ENCODE measurements at regions of chr21 and their contacts with region 1.

Region 1: DNA sequence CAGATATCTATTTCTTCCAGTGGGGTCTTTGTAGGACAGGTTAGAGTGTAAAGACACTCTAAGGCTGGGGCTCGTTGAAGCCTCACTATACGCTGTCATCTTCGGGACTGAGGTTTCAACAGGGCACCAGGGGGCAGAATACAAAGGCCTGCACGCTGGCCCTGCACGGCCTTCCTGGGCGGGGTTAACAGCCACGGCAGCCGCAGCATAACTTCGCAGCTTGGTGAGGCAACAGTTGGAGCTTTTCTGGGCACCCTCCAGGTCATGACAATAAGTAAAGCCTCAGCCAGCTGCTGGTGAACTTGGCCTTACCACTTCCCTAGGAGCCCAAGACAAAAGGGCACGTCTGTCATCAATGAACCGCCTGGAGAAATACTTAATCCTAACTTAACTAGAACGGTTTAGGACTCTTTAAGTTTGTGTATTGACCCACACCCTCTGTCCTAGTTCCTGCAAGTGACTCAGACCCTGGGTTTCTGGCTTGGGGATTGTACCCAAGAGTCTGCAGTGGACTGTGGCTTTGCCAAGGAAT is 2.3 kb upstream of the RUNX1 start:
- DNase-seq: peak; percentile 68 to 94 (median 84)
- ATAC-seq: peak; percentile 41
- H3K4me3 ChIP-seq: no peak overlapping the region
- H3K4me3 Mint-ChIP-seq: peak overlapping the region; percentile 95
- H3K27ac ChIP-seq: peak overlapping the region in 1 of 2 experiments; percentile 79
- H3K27ac Mint-ChIP-seq: peak overlapping the region; percentile 97
- H3K4me1 ChIP-seq: peaks cover 29% of the 10 kb centered on the region
- H3K4me1 Mint-ChIP-seq: peaks cover 49% of the 10 kb centered on the region
- H3K27me3 ChIP-seq: no peaks in the 10 kb centered on the region
- H3K27me3 Mint-ChIP-seq: no peaks in the 10 kb centered on the region
- CTCF ChIP-seq: peak; percentile 58

Region 2: GRCh38 chr21:34807146-34807880 is 244.0 kb before region 1 on chr21:
- CTCF ChIA-PET with region 1: no interaction called
- POLR2A ChIA-PET with region 1: interaction called, 3 read pairs
- intact Hi-C with region 1: loop called (anchors 2 to 10 kb)
- DNase-seq: peak in 8 of 9 experiments; percentile 45 to 87 (median 66)
- ATAC-seq: peak; percentile 86
- H3K4me3 ChIP-seq: no peak overlapping the region
- H3K4me3 Mint-ChIP-seq: no peak overlapping the region
- H3K27ac ChIP-seq: peak overlapping the region; percentile 12 to 84
- H3K27ac Mint-ChIP-seq: peak overlapping the region; percentile 92
- H3K4me1 ChIP-seq: peaks cover 44% of the 10 kb centered on the region
- H3K4me1 Mint-ChIP-seq: peaks cover 70% of the 10 kb centered on the region
- H3K27me3 ChIP-seq: no peaks in the 10 kb centered on the region
- H3K27me3 Mint-ChIP-seq: no peaks in the 10 kb centered on the region
- CTCF ChIP-seq: no peak

Region 3: DNA sequence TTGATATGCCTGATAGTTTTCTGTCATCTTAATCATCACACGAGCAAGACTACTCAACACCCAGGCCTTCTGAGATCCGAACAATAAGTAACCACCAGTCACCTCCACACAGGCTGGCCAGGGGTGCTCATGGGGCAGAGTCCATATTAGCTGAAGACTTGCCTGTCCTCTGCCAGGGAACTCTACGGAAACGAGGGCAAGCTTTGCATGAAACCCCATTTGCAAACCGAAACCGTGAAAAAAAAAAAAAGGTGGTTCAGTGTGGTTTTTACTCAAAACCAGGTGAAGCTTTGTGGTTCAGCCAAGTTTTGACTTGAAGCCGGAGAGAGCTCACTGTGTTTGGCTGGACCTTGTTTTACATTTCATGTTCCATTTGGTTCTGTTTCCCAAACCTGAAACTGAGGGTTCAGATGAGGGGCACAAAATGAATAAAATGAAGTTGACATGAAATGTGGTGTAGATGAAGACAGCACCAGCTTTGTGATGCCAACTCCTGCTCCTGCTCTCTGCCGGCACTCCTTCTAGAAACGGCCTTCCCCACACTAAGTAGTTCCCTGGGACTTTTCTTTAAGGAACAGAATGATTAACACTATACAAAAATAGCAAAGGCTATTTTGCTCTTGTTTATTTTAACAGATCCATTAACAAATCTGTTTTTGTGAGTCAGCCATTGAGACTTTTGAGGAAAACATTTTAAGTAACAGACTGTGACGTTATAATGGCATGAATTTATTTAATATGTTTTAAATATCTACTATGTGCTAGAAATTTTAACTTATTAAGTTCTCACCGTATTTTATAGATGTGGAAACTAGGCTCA is 77.0 kb before region 1 on chr21:
- CTCF ChIA-PET with region 1: interaction called, 4 read pairs
- POLR2A ChIA-PET with region 1: interaction called, 22 read pairs
- intact Hi-C with region 1: loop called in 1 of 2 experiments (anchors 2 kb)
- DNase-seq: peak in 8 of 9 experiments; percentile 30 to 86 (median 54)
- ATAC-seq: peak; percentile 84
- H3K4me3 ChIP-seq: peak overlapping the region; percentile 19 to 22
- H3K4me3 Mint-ChIP-seq: peak overlapping the region; percentile 78
- H3K27ac ChIP-seq: peak overlapping the region; percentile 8 to 36
- H3K27ac Mint-ChIP-seq: peak overlapping the region; percentile 89
- H3K4me1 ChIP-seq: peaks cover 59% of the 10 kb centered on the region
- H3K4me1 Mint-ChIP-seq: peaks cover 85% of the 10 kb centered on the region
- H3K27me3 ChIP-seq: no peaks in the 10 kb centered on the region
- H3K27me3 Mint-ChIP-seq: no peaks in the 10 kb centered on the region
- CTCF ChIP-seq: no peak

Region 4: GRCh38 chr21:35026617-35027562 is 24.5 kb before region 1 on chr21:
- CTCF ChIA-PET with region 1: interaction called, 27 read pairs
- POLR2A ChIA-PET with region 1: interaction called, 80 read pairs
- intact Hi-C with region 1: loop called in 1 of 2 experiments (anchors 1 kb)
- DNase-seq: peak; percentile 75 to 96 (median 88)
- ATAC-seq: peak; percentile 83
- H3K4me3 ChIP-seq: peak overlapping the region; percentile 32 to 39
- H3K4me3 Mint-ChIP-seq: peak overlapping the region; percentile 77
- H3K27ac ChIP-seq: peak overlapping the region; percentile 74 to 77
- H3K27ac Mint-ChIP-seq: peak overlapping the region; percentile 97
- H3K4me1 ChIP-seq: peaks cover 80% of the 10 kb centered on the region
- H3K4me1 Mint-ChIP-seq: peaks cover 89% of the 10 kb centered on the region
- H3K27me3 ChIP-seq: no peaks in the 10 kb centered on the region
- H3K27me3 Mint-ChIP-seq: no peaks in the 10 kb centered on the region
- CTCF ChIP-seq: no peak

Region 5: GRCh38 chr21:35138665-35139381 is 87.5 kb after region 1 on chr21:
- CTCF ChIA-PET with region 1: interaction called, 3 read pairs
- POLR2A ChIA-PET with region 1: no interaction called
- intact Hi-C with region 1: loop called in 1 of 2 experiments (anchors 5 kb)
- DNase-seq: peak in 8 of 9 experiments; percentile 12 to 71 (median 56)
- ATAC-seq: peak; percentile 95
- H3K4me3 ChIP-seq: peak overlapping the region; percentile 2 to 35
- H3K4me3 Mint-ChIP-seq: peak overlapping the region; percentile 58
- H3K27ac ChIP-seq: no peak overlapping the region
- H3K27ac Mint-ChIP-seq: peak overlapping the region; percentile 43
- H3K4me1 ChIP-seq: peaks cover 13% of the 10 kb centered on the region
- H3K4me1 Mint-ChIP-seq: peaks cover 16% of the 10 kb centered on the region
- H3K27me3 ChIP-seq: no peaks in the 10 kb centered on the region
- H3K27me3 Mint-ChIP-seq: no peaks in the 10 kb centered on the region
- CTCF ChIP-seq: no peak

Region 6: GRCh38 chr21:35616090-35616489 is 564.7 kb after region 1 on chr21:
- CTCF ChIA-PET with region 1: interaction called, 6 read pairs
- POLR2A ChIA-PET with region 1: no interaction called
- intact Hi-C with region 1: loop called in 1 of 2 experiments (anchors 2 kb)
- DNase-seq: peak in 2 of 9 experiments; percentile 11 to 24
- ATAC-seq: no peak
- H3K4me3 ChIP-seq: no peak overlapping the region
- H3K4me3 Mint-ChIP-seq: no peak overlapping the region
- H3K27ac ChIP-seq: no peak overlapping the region
- H3K27ac Mint-ChIP-seq: no peak overlapping the region
- H3K4me1 ChIP-seq: no peaks in the 10 kb centered on the region
- H3K4me1 Mint-ChIP-seq: peaks cover 2% of the 10 kb centered on the region
- H3K27me3 ChIP-seq: no peaks in the 10 kb centered on the region
- H3K27me3 Mint-ChIP-seq: no peaks in the 10 kb centered on the region
- CTCF ChIP-seq: peak; percentile 28

Region 7: GRCh38 chr21:36005018-36005417 is 953.7 kb after region 1 on chr21:
- CTCF ChIA-PET with region 1: no interaction called
- POLR2A ChIA-PET with region 1: no interaction called
- intact Hi-C with region 1: no loop called
- DNase-seq: peak in 1 of 9 experiments; percentile 21
- ATAC-seq: no peak
- H3K4me3 ChIP-seq: no peak overlapping the region
- H3K4me3 Mint-ChIP-seq: no peak overlapping the region
- H3K27ac ChIP-seq: no peak overlapping the region
- H3K27ac Mint-ChIP-seq: no peak overlapping the region
- H3K4me1 ChIP-seq: no peaks in the 10 kb centered on the region
- H3K4me1 Mint-ChIP-seq: no peaks in the 10 kb centered on the region
- H3K27me3 ChIP-seq: peaks cover 0 to 3% of the 10 kb centered on the region in 2 experiments
- H3K27me3 Mint-ChIP-seq: peaks cover 10% of the 10 kb centered on the region
- CTCF ChIP-seq: no peak

Measured in CD8-positive, alpha-beta T cell (primary cell).